Activated naive CD4-positive, alpha-beta T cell treated with anti-CD3 and anti-CD28 coated beads for 36 hours (primary cell): ENCODE measurements at regions of chr19 and their contacts with region 1.

Region 1: GRCh38 chr19:11798391-11799330 is at the start of gene ZNF491:
- DNase-seq: peak; percentile 95
- H3K4me3 Mint-ChIP-seq: peak within 1 kb of the TSS; percentile 84
- H3K27ac Mint-ChIP-seq: peak within 1 kb of the TSS; percentile 67
- H3K4me1 Mint-ChIP-seq: peaks cover 12% of the 10 kb centered on the region
- H3K27me3 Mint-ChIP-seq: peaks cover 2% of the 10 kb centered on the region
- total RNA-seq, gene ZNF491: 0.35 to 1.2 TPM

Region 2: GRCh38 chr19:11752244-11752736 is 46.4 kb before region 1 on chr19:
- CTCF ChIA-PET with region 1: no interaction called
- intact Hi-C with region 1: no loop called
- DNase-seq: no peak
- H3K4me3 Mint-ChIP-seq: no peak overlapping the region
- H3K27ac Mint-ChIP-seq: no peak overlapping the region
- H3K4me1 Mint-ChIP-seq: no peaks in the 10 kb centered on the region
- H3K27me3 Mint-ChIP-seq: peaks cover 9% of the 10 kb centered on the region

Region 3: GRCh38 chr19:11766597-11767591 is 31.8 kb before region 1 on chr19 and contains the start of gene ZNF441:
- CTCF ChIA-PET with region 1: interaction called, 7 read pairs
- intact Hi-C with region 1: loop called (anchors 2 kb)
- DNase-seq: peak; percentile 98
- H3K4me3 Mint-ChIP-seq: peak within 1 kb of the TSS; percentile 96
- H3K27ac Mint-ChIP-seq: peak within 1 kb of the TSS; percentile 93
- H3K4me1 Mint-ChIP-seq: peaks cover 16% of the 10 kb centered on the region
- H3K27me3 Mint-ChIP-seq: peaks cover 2% of the 10 kb centered on the region
- total RNA-seq, gene ZNF441: 4.0 TPM

Region 4: DNA sequence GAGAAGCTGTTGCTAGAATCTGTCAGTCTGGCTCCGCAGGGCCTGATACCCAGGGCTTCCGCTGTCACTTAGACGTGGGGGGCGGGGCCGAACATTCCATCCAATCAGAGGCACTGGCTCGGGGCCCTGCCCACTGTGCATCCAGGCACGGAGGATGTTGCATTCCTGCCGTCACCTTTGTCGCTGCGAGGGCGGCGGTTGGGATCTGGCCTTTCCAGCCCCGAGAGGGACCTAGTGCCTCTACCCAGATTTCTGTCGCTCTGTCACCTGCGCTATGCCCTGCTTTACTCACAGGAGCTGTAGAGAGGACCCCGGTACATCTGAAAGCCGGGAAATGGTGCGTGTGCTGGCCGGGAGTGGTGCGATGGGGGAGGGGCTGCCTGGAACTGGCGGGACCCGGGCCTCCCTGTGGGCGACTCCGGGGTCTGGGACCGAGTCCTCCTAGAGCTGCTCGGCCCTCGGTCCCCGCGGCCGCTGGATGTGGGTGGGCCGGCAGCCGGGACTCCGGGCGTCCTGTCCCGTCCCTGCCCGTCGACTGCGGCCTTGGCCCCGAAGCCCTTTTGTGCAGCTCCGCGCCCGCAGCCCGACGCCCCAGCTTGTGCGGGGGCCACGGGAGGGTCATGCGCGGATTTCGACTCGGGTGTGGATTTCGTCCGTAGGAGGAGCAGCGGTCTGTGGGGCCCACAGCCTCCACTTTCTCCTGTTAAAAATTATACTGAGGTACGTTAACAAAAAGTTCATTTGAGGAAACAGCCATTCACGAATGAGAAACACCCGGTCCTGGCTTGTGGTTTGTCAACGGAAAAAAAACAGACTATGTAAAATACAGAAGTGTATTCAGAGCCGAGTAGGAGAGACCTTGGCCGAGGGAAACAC is 50.2 kb after region 1 on chr19 and contains the start of gene ZNF439:
- CTCF ChIA-PET with region 1: interaction called, 7 read pairs
- intact Hi-C with region 1: loop called (anchors 2 kb)
- DNase-seq: peak; percentile 97
- H3K4me3 Mint-ChIP-seq: peak within 1 kb of the TSS; percentile 83
- H3K27ac Mint-ChIP-seq: peak within 1 kb of the TSS; percentile 76
- H3K4me1 Mint-ChIP-seq: peaks cover 15% of the 10 kb centered on the region
- H3K27me3 Mint-ChIP-seq: no peaks in the 10 kb centered on the region
- total RNA-seq, gene ZNF439: 3.6 to 4.4 TPM

Region 5: DNA sequence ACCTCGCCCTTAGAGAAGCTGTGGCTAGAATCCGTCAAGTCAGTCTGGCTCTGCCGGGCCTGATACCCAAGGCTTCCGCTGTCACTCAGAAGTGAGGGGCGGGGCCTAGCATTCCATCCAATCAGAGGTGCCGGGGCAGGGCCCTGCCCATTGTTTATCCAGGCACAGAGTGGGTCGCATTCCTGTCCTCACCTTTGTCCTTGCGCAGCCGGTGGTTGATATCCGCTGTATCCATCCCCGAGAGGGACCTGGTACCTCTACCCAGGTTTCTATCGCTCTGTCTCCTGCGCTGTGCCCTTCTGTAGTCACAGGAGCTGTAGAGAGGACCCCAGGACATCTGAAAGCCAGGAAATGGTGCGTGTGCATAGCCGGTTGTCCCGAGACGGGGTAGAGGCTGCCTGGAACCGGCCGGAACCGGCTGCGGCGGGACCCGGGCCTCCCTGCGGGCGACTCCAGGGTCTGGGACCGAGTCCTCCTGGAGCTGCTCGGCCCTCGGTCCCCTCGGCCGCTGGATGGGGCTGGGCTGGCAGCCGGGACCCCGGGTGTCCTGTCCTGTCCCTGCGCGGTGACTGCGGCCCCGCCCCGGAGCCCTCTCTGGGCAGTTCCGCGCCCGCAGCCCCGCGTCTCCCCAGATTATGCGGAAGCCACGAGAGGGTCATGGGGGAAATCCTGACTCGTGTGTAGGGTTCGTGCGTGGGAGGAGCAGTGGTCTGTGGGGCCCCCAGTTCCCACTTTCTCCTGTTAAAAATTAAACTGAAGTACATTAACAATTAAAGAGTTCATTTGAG is 166.4 kb after region 1 on chr19 and contains the start of gene ZNF763:
- CTCF ChIA-PET with region 1: interaction called, 9 read pairs
- intact Hi-C with region 1: loop called (anchors 1 kb)
- DNase-seq: peak; percentile 95
- H3K4me3 Mint-ChIP-seq: peak within 1 kb of the TSS; percentile 86
- H3K27ac Mint-ChIP-seq: peak within 1 kb of the TSS; percentile 85
- H3K4me1 Mint-ChIP-seq: peaks cover 20% of the 10 kb centered on the region
- H3K27me3 Mint-ChIP-seq: no peaks in the 10 kb centered on the region
- total RNA-seq, gene ZNF763: 0.50 to 0.54 TPM

Region 6: GRCh38 chr19:12139885-12140547 is 341.4 kb after region 1 on chr19 and contains the start of gene ZNF20:
- CTCF ChIA-PET with region 1: interaction called, 6 read pairs
- intact Hi-C with region 1: loop called (anchors 1 kb)
- DNase-seq: peak; percentile 95
- H3K4me3 Mint-ChIP-seq: peak within 1 kb of the TSS; percentile 92
- H3K27ac Mint-ChIP-seq: peak within 1 kb of the TSS; percentile 65
- H3K4me1 Mint-ChIP-seq: peaks cover 32% of the 10 kb centered on the region
- H3K27me3 Mint-ChIP-seq: no peaks in the 10 kb centered on the region
- total RNA-seq, gene ZNF20: 2.1 to 3.1 TPM